Tibial artery (tissue), 4 donors: ENCODE measurements at regions of chr15 and their contacts with region 1.

Region 1: DNA sequence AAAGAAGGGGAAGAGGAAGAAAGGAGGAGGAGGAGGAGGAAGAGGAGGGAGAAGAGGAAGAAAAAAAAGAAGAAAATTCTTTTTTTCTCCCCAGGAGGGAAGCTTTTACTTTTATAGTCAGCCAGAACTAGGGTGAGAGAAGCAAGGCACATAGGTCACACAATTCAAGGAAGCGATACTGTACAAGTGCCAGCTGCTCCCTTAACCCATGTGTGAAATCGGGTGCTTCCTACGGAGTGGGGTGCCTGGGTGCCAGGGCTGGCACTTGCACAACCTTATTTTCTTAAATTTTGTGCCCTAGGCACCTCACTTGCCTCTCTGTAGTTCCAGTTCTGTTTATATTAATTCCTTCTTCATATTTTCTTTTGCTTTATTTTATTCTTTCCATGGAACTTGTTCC is 150.4 kb downstream of the LIPC start:
- DNase-seq: no peak
- H3K4me3 ChIP-seq: no peak overlapping the region
- H3K27ac ChIP-seq: no peak overlapping the region
- H3K4me1 ChIP-seq: no peaks in the 10 kb centered on the region
- H3K27me3 ChIP-seq: peaks cover 0 to 3% of the 10 kb centered on the region in 2 donors
- CTCF ChIP-seq: no peak

Region 2: GRCh38 chr15:57994221-57995049 is 587.7 kb before region 1 on chr15:
- intact Hi-C with region 1: loop called (anchors 5 kb)
- DNase-seq: no peak
- H3K4me3 ChIP-seq: no peak overlapping the region
- H3K27ac ChIP-seq: no peak overlapping the region
- H3K4me1 ChIP-seq: no peaks in the 10 kb centered on the region
- H3K27me3 ChIP-seq: peaks cover 0 to 5% of the 10 kb centered on the region in 2 donors
- CTCF ChIP-seq: no peak

Region 3: GRCh38 chr15:58393241-58393662 is 188.9 kb before region 1 on chr15:
- intact Hi-C with region 1: no loop called
- DNase-seq: no peak
- H3K4me3 ChIP-seq: no peak overlapping the region
- H3K27ac ChIP-seq: no peak overlapping the region
- H3K4me1 ChIP-seq: peaks cover 0 to 2% (median 0%) of the 10 kb centered on the region in 4 donors
- H3K27me3 ChIP-seq: no peaks in the 10 kb centered on the region
- CTCF ChIP-seq: no peak